Posterior vena cava (tissue), 2 donors: ENCODE measurements at regions of chrX and their contacts with region 1.

Region 1: DNA sequence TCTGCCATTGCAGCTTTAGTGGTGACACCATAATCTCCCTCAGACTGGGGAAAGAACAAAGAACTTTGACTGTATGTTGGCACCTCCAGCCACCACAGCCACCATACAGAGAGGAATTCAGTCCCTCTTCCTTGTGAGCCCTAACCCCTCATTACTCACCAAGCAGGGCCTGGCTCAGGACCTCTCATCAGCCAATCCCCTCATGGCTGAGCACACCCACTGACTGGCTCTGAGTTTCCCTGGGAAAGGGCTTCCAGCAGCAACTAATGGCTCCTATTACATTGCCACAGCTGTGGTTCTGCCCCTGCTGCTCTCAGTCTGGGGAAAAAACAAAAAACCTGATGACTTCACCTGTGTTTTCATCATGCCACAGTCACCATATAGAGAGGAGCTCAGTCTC is 1482.6 kb downstream of the FAM133A start:
- DNase-seq: no peak

Region 2: GRCh38 chrX:94302447-94302846 is 854.1 kb before region 1 on chrX:
- intact Hi-C with region 1: loop called in 1 of 2 experiments (anchors 5 kb)
- DNase-seq: no peak